RWPE1 (cell line): ENCODE measurements at regions of chr9 and their contacts with region 1.

Region 1: GRCh38 chr9:104386425-104387069 is 117.5 kb upstream of the OR13F1 start:
- DNase-seq: peak; percentile 64
- H3K27ac ChIP-seq: no peak overlapping the region
- CTCF ChIP-seq: peak; percentile 94

Region 2: GRCh38 chr9:104177003-104177611 is 209.4 kb before region 1 on chr9:
- CTCF ChIA-PET with region 1: interaction called, 48 read pairs
- POLR2A ChIA-PET with region 1: no interaction called
- DNase-seq: peak; percentile 41
- H3K27ac ChIP-seq: no peak overlapping the region
- CTCF ChIP-seq: peak; percentile 72

Region 3: DNA sequence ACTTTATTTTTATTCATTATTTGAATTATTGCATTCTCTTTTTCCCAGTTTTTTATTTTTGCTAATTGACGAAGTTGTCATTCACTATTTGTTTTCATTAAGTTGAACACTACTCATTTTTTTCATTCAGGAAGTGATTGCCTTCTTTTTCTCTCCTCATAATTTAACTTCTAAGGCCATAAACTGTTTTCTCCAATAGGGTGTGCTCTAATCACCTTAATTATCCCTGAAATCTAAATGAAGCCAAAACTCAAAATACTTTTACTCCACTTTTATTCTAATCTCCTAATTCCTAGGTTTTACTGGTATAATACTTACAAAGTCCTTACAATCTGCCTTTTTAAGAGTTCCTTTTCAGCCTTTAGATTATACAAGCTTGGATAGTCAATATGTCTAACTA is 221.8 kb after region 1 on chr9:
- CTCF ChIA-PET with region 1: no interaction called
- POLR2A ChIA-PET with region 1: no interaction called
- DNase-seq: no peak
- H3K27ac ChIP-seq: no peak overlapping the region
- CTCF ChIP-seq: peak; percentile 49

Region 4: DNA sequence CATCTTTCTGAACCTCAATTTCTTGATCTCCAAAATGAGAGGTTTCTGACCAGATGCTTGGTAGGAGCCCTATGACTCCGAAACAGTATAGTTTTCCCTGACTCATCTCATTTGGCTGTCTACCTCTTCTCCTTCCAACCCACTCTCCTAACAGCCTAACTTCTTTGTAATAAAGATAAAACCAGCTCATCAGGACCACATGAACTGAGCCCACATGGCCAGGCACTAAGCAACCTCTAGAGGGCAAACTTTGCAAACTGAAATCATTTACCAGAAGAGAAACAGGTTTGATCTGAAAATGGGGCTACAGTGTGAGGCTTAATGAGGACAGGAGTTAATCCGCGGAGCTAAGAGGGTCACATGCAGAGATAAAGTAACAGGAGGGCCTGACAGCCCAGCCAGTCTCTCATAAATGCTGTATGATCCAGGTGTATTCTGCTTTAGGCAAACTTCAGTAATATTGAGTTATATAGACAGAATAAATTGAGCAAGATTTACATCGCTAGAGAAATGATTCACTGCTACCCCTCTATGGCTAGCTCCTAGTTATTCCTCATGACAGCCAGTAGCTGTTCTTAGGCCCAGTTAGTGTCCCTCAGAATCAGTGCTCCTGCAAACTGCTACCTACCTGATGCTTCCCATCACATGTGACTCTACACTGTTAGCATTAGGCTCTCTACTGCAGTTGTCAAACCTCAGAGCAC is 476.8 kb after region 1 on chr9:
- CTCF ChIA-PET with region 1: no interaction called
- POLR2A ChIA-PET with region 1: interaction called, 11 read pairs
- DNase-seq: peak; percentile 87
- H3K27ac ChIP-seq: no peak overlapping the region
- CTCF ChIP-seq: peak; percentile 97